Activated CD4-positive, alpha-beta memory T cell treated with anti-CD3 and anti-CD28 coated beads for 36 hours (primary cell): ENCODE measurements at regions of chr5 and their contacts with region 1.

Region 1: DNA sequence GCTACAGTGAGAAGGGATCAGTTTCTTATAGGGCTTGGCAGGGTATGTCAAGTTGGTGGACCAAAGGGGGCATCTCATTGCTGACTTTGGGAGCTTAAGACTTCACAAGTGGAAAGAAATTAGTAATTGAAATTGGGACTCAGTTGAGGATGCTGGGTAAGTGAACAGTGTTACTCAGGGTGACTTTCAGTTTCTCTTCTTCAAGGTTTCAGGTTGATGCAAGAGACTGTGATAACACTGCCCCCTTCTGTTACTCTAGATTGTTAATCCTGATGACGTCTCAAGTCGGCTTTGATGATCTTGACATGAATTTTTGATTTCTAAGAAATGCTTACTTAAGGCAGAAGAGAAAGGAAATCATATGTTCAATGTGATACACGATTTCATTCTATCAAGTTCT is 21.3 kb downstream of the KCTD16 start:
- DNase-seq: no peak
- H3K4me3 Mint-ChIP-seq: no peak overlapping the region
- H3K27ac Mint-ChIP-seq: no peak overlapping the region
- H3K4me1 Mint-ChIP-seq: peaks cover 31% of the 10 kb centered on the region
- H3K27me3 Mint-ChIP-seq: no peaks in the 10 kb centered on the region

Region 2: DNA sequence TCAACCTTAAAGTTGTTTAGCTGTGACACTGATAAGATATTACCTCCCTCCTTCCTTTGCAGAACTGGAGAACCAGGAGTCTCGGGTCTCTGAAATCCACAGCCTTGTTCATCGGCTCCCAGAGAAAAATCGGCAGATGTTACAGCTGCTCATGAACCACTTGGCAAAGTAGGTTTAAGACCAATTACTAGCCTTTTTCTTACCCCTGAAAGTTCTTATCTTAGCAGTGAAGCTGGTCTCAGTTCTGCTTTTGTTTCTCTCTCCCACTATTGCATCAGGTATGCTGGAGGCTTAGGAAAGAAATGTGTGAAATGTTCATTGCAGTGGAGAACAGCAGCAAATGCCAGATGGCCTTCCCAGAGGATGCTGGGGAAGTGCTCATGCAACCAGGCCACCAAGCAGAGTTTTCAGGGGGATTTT is 1134.4 kb before region 1 on chr5:
- CTCF ChIA-PET with region 1: no interaction called
- POLR2A ChIA-PET with region 1: no interaction called
- intact Hi-C with region 1: loop called (anchors 1 kb)
- DNase-seq: no peak
- H3K4me3 Mint-ChIP-seq: no peak overlapping the region
- H3K27ac Mint-ChIP-seq: peak overlapping the region; percentile 85
- H3K4me1 Mint-ChIP-seq: peaks cover 69% of the 10 kb centered on the region
- H3K27me3 Mint-ChIP-seq: no peaks in the 10 kb centered on the region

Region 3: DNA sequence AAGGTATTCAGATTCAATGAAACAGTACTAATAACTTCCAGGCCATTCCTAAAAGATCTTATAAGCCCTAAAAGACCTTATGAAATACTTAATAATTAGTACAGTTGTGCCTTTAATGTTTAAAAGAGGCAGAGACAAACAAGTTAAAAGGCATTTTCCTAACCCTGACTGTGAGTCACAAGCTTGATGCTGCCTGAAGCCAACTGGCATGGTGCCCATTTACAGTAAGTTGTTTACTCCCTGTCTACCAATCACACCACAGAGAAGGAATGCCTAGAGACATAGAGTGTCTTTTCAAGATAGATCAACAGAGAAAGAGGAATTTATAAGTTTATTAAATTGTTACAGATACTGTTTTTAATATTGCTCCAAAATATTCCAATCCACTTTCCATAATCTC is 836.3 kb before region 1 on chr5:
- CTCF ChIA-PET with region 1: no interaction called
- POLR2A ChIA-PET with region 1: no interaction called
- intact Hi-C with region 1: loop called (anchors 5 kb)
- DNase-seq: peak; percentile 50
- H3K4me3 Mint-ChIP-seq: no peak overlapping the region
- H3K27ac Mint-ChIP-seq: no peak overlapping the region
- H3K4me1 Mint-ChIP-seq: peaks cover 75% of the 10 kb centered on the region
- H3K27me3 Mint-ChIP-seq: no peaks in the 10 kb centered on the region

Region 4: DNA sequence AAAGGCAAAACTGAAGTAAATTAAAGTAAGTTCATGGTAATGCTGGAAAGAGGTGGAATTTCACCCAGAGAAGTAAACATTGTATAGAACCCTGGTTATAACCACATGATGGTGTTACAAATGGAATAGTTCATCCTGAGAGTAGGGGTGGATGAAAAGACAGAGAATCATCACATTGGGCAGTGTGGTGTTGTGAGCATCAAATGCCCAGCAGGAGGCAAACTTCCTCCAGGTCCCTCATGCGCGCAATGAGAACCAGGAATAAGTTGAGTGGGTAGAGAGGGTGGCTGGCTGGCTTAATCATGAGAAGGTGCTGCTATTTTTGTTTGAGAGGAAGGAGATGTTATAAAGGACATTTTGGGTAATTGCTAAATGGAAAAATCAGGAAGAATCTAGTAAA is 543.3 kb before region 1 on chr5:
- CTCF ChIA-PET with region 1: no interaction called
- POLR2A ChIA-PET with region 1: no interaction called
- intact Hi-C with region 1: loop called (anchors 2 kb)
- DNase-seq: peak; percentile 21
- H3K4me3 Mint-ChIP-seq: no peak overlapping the region
- H3K27ac Mint-ChIP-seq: no peak overlapping the region
- H3K4me1 Mint-ChIP-seq: peaks cover 18% of the 10 kb centered on the region
- H3K27me3 Mint-ChIP-seq: peaks cover 3% of the 10 kb centered on the region

Region 5: GRCh38 chr5:143968011-143968878 is 223.8 kb before region 1 on chr5:
- CTCF ChIA-PET with region 1: interaction called, 3 read pairs
- POLR2A ChIA-PET with region 1: no interaction called
- intact Hi-C with region 1: loop called (anchors 5 kb)
- DNase-seq: no peak
- H3K4me3 Mint-ChIP-seq: no peak overlapping the region
- H3K27ac Mint-ChIP-seq: no peak overlapping the region
- H3K4me1 Mint-ChIP-seq: no peaks in the 10 kb centered on the region
- H3K27me3 Mint-ChIP-seq: peaks cover 15% of the 10 kb centered on the region

Region 6: GRCh38 chr5:144308906-144309670 is 117.1 kb after region 1 on chr5:
- CTCF ChIA-PET with region 1: no interaction called
- POLR2A ChIA-PET with region 1: no interaction called
- intact Hi-C with region 1: no loop called
- DNase-seq: no peak
- H3K4me3 Mint-ChIP-seq: no peak overlapping the region
- H3K27ac Mint-ChIP-seq: no peak overlapping the region
- H3K4me1 Mint-ChIP-seq: no peaks in the 10 kb centered on the region
- H3K27me3 Mint-ChIP-seq: no peaks in the 10 kb centered on the region

Region 7: GRCh38 chr5:145936401-145937131 is 1744.6 kb after region 1 on chr5 and contains the start of gene SH3RF2:
- CTCF ChIA-PET with region 1: no interaction called
- POLR2A ChIA-PET with region 1: no interaction called
- intact Hi-C with region 1: loop called (anchors 2 kb)
- DNase-seq: peak; percentile 68
- H3K4me3 Mint-ChIP-seq: peak within 1 kb of the TSS; percentile 42
- H3K27ac Mint-ChIP-seq: no peak within 1 kb of the TSS
- H3K4me1 Mint-ChIP-seq: peaks cover 26% of the 10 kb centered on the region
- H3K27me3 Mint-ChIP-seq: peaks cover 49% of the 10 kb centered on the region
- total RNA-seq, gene SH3RF2: 0.12 TPM in 1 of 2 experiments, not detected in the other